Left colon (tissue), 2 donors: ENCODE measurements at regions of chr11 and their contacts with region 1.

Region 1: DNA sequence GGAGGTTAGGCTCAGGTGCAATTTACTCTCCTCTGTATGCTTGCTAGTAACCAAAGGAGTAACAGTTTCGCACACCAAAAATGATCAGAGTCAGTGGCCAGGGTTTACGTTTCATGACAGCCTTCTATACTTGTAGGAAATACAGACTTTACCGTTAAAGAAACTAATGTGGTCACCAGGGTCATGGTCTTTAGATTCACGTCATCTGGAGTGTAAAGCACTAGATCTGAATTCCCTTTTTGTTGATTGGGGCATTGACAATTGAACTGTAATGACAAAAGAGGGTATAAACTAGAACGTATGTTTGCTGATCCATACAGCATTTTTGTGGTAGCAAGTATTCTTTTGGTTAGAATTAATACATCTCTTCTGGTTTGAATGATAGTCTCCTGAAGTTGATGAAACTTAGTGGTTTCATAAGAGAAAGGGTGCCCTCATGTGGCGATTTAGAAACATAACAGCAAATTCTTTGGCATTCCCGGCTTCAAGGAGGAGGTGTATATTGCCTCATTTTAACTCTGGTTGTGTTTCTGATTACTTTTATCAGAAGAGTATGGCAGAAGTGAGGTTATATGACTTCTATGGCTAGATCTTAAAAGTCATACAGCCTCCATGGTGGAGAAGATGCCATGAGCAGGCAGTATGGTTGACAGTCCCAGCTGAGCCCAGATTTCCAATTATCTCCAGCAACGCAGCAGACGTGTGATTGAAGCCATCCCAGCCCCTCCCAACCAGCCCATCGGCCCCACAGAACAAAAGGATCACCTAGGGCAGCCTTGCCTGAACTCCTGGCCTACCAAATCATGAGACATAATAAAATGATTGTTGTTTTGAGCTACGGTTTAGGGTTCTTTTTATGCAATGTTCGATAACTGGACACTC is 35.1 kb downstream of the MMP7 start:
- DNase-seq: no peak
- ATAC-seq: peak; percentile 86

Region 2: DNA sequence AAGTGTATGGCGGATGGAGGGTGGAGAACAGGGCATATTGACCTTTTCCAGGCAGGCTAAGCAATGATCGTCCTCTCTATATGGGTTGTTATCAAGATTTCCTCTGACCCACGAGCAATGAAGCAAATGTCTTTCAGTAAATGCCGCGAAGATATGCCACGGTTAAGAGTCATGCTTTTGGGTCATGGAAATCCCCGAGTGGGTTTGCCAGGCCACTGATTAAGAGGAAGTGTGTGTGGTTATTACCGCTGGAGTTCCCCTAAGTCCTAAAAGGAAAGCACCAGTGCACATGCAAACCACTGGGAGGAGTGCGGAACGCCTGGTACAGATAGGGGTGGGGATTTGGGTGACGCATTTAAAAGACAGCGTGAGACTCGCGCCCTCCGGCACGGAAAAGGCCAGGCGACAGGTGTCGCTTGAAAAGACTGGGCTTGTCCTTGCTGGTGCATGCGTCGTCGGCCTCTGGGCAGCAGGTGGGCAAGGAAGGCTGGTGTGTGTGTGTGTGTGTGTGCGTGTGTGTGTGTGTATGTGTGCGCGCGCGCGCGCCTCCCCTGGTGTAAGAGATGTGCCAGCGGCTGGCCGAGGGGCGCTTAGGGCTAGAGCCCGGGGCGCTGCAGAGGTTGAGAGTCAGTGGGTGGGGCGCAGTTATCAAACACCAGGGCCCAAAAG is 178.2 kb before region 1 on chr11 and contains the start of gene BIRC3:
- intact Hi-C with region 1: no loop called
- DNase-seq: peak; percentile 90 to 96
- ATAC-seq: peak; percentile 93
- total RNA-seq, gene BIRC3: 41.7 to 53.6 TPM

Region 3: DNA sequence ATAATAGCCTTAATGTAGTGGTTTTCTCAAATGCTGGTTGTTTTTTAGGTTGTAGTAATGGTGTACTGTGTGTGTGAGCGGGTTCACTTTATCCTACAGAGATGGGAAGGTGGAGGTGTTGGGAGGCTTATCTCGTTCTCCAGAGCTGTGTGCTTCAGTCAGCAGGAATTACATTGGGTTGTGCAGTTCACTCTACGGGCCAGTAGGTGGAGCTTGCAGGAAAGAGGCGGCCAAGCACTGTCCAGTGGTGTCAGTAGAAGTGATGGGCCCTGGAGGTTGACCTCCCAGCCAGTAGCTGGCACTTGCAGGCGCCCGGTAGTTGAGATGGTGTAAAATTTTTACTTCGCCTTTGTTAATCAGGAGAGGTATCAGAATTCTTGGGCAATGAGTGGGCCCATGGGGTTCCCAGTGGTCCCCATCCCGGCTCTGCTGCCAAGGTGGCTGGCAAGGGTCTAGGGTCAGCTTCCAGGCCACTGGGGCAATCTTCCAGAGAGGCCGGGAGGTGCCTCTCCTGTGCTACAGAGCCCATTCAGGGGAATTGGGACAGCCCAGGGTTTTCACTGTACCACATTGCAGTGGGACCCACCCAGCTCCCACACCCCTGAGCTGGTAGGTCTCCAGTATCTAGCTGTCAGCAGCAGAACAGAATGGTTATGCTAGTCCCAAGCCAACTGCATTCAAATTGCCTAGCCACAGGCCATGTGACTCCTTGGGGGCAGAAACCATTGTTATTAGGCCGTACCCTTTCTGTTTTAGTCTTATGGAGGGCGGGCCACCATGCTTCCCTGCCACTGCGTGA is 104.5 kb before region 1 on chr11:
- intact Hi-C with region 1: loop called in 1 of 2 experiments (anchors 10 kb)
- DNase-seq: peak; percentile 58 to 72
- ATAC-seq: peak; percentile 90

Region 4: DNA sequence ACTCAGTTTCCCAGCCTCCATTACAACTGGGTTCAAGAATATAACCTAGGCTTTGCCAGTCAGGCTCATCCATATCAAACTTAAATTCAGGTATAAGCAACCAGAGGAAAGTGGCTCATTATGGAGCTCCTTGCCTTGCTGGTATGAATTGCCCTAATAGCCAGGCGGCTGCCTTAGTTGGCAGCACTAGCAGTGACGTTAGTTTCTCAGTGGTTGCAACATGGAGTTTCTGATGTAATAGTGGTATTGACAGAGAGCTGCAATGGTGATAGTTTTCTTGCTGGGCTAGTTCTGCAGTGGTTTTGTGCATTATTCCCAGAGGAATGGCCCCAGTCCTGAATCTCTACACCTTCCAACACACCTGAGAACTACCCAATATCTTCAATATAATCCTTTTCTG is 39.0 kb before region 1 on chr11:
- intact Hi-C with region 1: no loop called
- DNase-seq: no peak
- ATAC-seq: no peak

Region 5: GRCh38 chr11:102824556-102824955 is 329.2 kb after region 1 on chr11:
- intact Hi-C with region 1: no loop called
- DNase-seq: no peak
- ATAC-seq: no peak